ENCODE measurements at regions of chr10 and their contacts with region 1.

Region 1: DNA sequence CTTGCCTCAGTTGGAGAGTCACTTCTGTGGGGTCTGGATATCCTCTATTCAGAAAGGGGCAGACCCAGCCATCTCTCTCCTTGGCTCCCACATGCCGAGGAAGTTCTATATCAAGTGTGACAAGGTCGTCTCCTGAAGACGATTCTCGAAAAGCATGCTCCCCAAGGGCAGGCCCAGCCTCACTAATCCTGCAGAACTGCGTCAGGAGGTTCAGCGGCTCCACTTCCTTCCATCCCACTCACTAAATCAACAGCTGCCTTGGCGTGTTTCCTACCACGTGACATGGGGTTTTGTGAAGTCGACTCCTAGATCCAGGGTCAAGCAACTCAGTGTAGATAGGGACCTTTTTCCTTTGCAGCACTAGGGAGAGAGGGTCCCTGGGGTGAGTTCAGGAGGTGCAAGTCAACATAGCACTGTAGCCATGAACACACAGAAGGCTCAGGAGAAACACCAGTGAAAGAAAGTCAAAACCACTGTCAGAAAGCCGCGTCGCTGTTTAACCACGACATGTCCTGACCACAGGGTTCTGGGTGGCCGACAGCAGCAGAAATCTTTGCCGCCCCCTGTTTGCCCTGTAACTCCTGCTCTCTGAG is 156.4 kb downstream of the PRPF18 start:
- DNase-seq: peak; percentile 45
- CTCF ChIP-seq: no peak

Region 2: DNA sequence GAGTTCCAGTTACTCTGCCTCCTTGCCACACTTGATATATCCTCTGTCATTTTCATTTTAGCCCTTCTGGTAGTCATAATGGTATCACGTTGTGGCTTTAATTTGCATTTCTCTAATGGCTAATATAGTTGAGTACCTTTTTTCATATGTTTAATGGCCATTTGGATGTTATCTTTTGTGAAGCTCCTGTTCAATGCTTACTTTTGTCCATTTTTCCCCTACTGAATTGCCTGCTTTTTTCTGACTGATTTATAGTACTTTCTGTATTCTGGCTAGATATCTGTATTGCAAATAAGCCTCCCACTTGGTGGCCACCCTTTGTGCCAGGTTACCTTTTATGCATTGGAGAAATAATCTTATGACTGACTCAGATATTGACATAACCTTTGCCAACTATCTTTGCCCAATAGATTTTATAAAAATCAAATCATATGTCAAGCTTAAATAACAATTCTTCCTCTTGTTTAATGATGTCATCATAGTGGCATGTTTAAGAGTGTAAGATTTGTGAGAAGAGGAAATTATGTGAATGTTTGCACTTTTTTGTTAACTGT is 105.8 kb before region 1 on chr10:
- CTCF ChIA-PET with region 1: no interaction called
- POLR2A ChIA-PET with region 1: no interaction called
- DNase-seq: no peak
- CTCF ChIP-seq: no peak

Region 3: GRCh38 chr10:13717931-13718772 is 25.0 kb before region 1 on chr10:
- CTCF ChIA-PET with region 1: interaction called, 16 read pairs
- POLR2A ChIA-PET with region 1: no interaction called
- DNase-seq: no peak
- CTCF ChIP-seq: no peak

Region 4: DNA sequence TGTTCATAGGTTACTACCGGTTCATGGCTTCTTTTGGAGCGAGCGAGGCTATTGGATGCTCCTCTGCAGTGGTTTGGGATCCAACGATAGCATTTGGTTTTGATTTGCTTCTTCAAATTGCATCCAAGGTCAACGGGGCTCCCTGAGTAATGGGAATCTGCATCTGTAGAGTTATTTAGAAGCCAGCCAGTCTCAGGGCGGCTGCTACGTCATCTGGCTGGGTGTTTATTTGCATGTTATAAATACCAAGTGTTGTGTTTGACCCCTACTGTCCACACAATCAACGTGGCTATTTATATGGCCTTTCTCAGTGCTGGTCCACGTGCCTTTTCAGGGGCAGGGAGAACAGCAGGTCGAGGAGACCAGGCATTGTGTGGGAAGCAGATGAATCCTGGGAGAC is 18.7 kb before region 1 on chr10:
- CTCF ChIA-PET with region 1: interaction called, 16 read pairs
- POLR2A ChIA-PET with region 1: no interaction called
- DNase-seq: no peak
- CTCF ChIP-seq: no peak